ENCODE measurements at regions of chr15 and their contacts with region 1.

Region 1: GRCh38 chr15:84588053-84588874 is 12.5 kb upstream of the ZSCAN2 start:
- DNase-seq: peak; percentile 89
- H3K4me3 Mint-ChIP-seq: peak overlapping the region; percentile 34
- H3K27ac Mint-ChIP-seq: no peak overlapping the region
- H3K4me1 Mint-ChIP-seq: peaks cover 2% of the 10 kb centered on the region
- H3K27me3 Mint-ChIP-seq: peaks cover 4% of the 10 kb centered on the region

Region 2: GRCh38 chr15:84883433-84883832 is 295.2 kb after region 1 on chr15:
- CTCF ChIA-PET with region 1: interaction called, 11 read pairs
- intact Hi-C with region 1: loop called (anchors 1 kb)
- DNase-seq: no peak
- H3K4me3 Mint-ChIP-seq: no peak overlapping the region
- H3K27ac Mint-ChIP-seq: no peak overlapping the region
- H3K4me1 Mint-ChIP-seq: no peaks in the 10 kb centered on the region
- H3K27me3 Mint-ChIP-seq: no peaks in the 10 kb centered on the region

Region 3: DNA sequence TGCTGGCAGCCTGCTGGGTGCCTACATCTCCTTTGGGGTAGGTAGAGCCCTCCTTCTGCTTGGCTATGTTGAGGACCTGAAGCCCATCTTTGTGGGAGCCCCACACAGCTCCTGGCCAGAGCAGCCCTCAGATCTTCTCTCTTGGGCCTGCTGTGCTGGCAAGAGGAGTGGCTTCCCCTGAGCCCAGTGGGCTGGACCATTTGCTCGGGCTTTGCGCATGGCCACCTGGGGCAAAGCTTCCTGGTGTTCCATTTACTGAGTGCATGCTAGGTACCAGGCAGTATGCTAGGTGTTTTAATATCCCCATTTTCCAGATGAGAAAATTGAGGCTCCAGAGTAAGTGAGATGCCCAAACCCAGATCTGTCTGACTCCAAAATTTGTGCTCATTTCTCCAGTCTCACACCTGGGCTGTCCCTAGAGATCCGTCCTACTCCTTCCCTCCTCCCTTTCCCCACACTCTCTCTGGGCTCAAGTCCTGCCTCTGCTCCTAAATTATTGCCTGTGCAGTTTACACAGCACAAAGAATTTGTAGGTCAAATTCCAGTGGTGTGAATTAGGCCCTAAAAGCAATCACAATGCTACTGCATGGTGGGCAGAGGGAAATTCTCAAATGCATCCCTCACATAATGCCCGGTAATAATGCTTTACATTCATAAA is 335.9 kb after region 1 on chr15:
- CTCF ChIA-PET with region 1: interaction called, 28 read pairs
- intact Hi-C with region 1: loop called (anchors 1 kb)
- DNase-seq: no peak
- H3K4me3 Mint-ChIP-seq: no peak overlapping the region
- H3K27ac Mint-ChIP-seq: no peak overlapping the region
- H3K4me1 Mint-ChIP-seq: peaks cover 6% of the 10 kb centered on the region
- H3K27me3 Mint-ChIP-seq: no peaks in the 10 kb centered on the region

Measured in activated naive CD4-positive, alpha-beta T cell treated with anti-CD3 and anti-CD28 coated beads for 36 hours (primary cell).